A673 (cell line): ENCODE measurements at regions of chr2 and their contacts with region 1.

Region 1: DNA sequence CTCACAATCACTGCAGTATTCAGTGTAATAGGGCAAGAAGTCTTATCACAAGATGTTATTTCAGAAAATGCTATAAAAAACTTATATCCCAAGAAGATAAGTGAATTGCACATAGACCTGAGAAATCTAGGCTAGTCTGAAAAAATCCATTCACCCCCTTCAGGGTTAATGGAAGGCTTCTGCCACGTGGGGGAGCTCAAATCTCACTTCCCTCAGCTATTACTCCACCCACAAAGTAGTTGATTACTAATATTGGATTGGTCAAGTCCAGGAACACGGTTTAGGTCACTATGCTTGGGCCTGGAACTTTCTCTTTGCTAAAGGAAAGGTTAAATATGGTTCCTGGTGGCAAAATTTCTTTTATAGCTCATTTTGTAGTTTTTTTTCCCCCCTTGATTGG is 51.2 kb upstream of the ADAM23 start:
- DNase-seq: peak; percentile 54
- H3K4me3 ChIP-seq: no peak overlapping the region
- H3K27ac ChIP-seq: no peak overlapping the region
- H3K4me1 ChIP-seq: no peaks in the 10 kb centered on the region
- H3K27me3 ChIP-seq: no peaks in the 10 kb centered on the region
- CTCF ChIP-seq: peak; percentile 72

Region 2: DNA sequence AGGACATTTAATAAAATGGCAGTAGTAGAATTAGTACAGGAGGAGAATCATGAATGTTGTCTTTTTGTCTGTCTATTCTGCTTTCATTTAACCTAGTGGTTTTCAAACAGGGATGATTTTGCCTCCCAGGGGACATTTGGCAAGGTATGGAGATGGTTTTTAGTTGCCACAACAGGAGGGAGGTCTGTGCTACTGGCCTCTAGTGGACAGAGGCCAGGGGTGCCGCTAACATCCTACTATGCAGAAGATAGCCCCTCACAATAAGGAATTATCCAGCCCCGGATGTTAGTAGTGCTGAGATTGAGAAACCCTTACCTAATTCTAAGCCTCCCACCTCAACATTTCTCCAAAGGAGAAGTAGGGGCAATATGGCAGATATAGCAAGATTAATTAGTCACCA is 391.6 kb after region 1 on chr2:
- CTCF ChIA-PET with region 1: no interaction called
- POLR2A ChIA-PET with region 1: no interaction called
- intact Hi-C with region 1: loop called (anchors 10 kb)
- DNase-seq: peak; percentile 13
- H3K4me3 ChIP-seq: no peak overlapping the region
- H3K27ac ChIP-seq: no peak overlapping the region
- H3K4me1 ChIP-seq: no peaks in the 10 kb centered on the region
- H3K27me3 ChIP-seq: no peaks in the 10 kb centered on the region
- CTCF ChIP-seq: peak; percentile 45